HEK293 (cell line): ENCODE measurements at regions of chr12 and their contacts with region 1.

Region 1: GRCh38 chr12:3275171-3276041 is 198.2 kb downstream of the TSPAN9 start:
- H3K4me3 ChIP-seq: no peak overlapping the region
- H3K27ac ChIP-seq: no peak overlapping the region
- H3K4me1 ChIP-seq: no peaks in the 10 kb centered on the region
- CTCF ChIP-seq: peak; percentile 86

Region 2: DNA sequence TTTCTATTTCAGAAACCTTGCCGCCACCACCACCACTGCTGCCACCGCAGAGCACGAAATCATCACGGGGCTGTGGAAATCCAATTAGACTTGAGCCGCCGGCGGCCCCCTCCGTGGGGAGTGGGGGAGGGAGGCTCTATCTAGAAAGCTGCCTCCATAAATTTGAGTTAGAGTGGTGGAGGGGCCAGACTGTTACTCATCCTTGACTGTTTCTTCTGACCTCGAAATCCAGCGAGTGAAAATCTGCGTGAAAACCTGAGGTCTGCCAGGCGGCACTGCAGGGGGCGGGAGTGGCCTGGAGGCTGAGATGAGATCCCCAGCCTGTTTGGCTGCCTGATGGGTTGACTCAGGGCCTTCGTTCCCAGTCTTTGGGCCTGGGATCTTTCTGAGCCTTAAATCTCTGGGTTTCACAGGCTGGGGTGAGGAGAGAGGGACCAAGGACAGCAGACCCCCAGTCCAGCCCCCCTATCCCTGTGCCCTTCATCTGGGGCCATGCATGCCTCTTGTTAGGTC is 168.3 kb before region 1 on chr12:
- CTCF ChIA-PET with region 1: interaction called, 13 read pairs
- POLR2A ChIA-PET with region 1: no interaction called
- H3K4me3 ChIP-seq: no peak overlapping the region
- H3K27ac ChIP-seq: peak overlapping the region; percentile 49; the same call in 1 of the 2 replicates
- H3K4me1 ChIP-seq: peaks cover 8% of the 10 kb centered on the region
- CTCF ChIP-seq: no peak

Region 3: DNA sequence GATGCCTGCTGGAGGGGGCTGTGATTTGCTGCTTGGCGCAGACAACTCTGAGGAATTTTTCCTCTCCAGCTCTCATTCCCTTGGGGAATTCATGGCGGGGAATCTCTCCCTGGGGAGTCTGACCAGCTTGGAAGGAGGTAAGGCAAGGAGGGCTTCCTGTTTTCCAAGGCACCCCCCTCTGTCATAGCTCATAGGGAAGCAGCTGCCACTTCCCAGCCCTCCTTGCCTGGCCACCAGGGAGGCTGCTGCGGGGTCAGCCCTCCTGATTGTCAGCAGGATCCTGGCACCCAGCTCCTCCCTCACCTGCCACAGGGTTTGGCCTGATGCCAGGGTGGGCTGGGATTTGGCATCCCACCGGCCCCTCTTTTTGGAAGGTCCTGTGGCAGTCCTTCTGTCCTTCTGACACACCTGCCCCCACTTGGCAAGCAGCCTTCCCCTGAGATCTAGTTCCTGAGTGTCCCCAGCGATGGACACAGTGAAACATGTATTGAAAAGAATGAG is 123.3 kb before region 1 on chr12:
- CTCF ChIA-PET with region 1: interaction called, 12 read pairs
- POLR2A ChIA-PET with region 1: no interaction called
- H3K4me3 ChIP-seq: no peak overlapping the region
- H3K27ac ChIP-seq: no peak overlapping the region
- H3K4me1 ChIP-seq: 0 out of 2 replicates have a peak, but pooled peaks cover 5% of the 10 kb centered on the region
- CTCF ChIP-seq: no peak

Region 4: DNA sequence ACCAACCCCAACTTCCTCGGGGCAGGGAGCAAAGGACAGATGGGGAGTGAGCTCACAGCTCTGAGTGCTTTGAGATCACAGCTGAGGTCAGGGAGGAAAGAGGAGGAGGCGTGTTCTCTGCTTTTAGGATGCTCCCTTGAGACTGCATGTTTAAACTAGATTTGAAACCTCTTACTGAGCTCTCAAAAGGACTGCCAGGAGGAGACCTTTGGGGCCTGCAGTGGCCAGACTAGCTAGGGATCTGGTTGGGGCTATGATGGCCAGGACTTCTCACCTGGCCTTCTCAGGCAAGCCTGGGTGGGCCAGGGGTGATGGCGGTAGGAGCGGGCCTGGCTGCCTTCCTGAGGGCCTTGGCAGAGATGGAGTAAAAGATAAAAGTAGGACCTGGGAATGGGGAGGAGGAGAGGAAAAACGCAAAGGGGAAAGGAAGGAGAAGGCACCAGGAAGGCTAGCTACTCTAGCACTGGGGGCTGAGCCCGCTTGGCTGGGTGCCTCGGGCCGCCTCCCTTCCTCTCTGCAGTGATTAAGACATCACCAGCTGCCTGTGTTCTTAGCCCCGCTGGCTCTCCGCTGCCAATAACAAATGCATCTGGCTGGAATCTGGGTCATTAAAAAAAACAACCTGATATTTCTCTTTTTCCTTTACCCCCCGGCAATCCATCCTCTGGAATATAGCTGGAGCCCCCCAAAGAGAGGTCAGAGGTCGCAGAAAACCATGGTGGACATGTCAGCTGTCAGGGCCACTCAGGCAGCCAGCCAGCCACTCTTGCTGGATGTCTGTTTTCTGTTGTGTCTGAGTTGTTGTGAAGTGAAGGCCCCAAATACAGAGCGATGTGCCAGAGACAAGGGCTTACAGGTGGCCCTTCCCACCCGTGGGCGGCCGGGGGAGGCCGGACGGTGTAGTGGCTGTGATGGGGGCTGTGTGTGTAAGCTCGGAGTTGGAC is 56.9 kb before region 1 on chr12:
- CTCF ChIA-PET with region 1: interaction called, 13 read pairs
- POLR2A ChIA-PET with region 1: no interaction called
- H3K4me3 ChIP-seq: no peak overlapping the region
- H3K27ac ChIP-seq: no peak overlapping the region
- H3K4me1 ChIP-seq: peaks cover 6% of the 10 kb centered on the region; the same call in 1 of the 2 replicates
- CTCF ChIP-seq: no peak

Region 5: GRCh38 chr12:3288690-3289089 is 13.3 kb after region 1 on chr12:
- CTCF ChIA-PET with region 1: interaction called, 13 read pairs
- POLR2A ChIA-PET with region 1: no interaction called
- H3K4me3 ChIP-seq: no peak overlapping the region
- H3K27ac ChIP-seq: no peak overlapping the region
- H3K4me1 ChIP-seq: no peaks in the 10 kb centered on the region
- CTCF ChIP-seq: no peak

Region 6: DNA sequence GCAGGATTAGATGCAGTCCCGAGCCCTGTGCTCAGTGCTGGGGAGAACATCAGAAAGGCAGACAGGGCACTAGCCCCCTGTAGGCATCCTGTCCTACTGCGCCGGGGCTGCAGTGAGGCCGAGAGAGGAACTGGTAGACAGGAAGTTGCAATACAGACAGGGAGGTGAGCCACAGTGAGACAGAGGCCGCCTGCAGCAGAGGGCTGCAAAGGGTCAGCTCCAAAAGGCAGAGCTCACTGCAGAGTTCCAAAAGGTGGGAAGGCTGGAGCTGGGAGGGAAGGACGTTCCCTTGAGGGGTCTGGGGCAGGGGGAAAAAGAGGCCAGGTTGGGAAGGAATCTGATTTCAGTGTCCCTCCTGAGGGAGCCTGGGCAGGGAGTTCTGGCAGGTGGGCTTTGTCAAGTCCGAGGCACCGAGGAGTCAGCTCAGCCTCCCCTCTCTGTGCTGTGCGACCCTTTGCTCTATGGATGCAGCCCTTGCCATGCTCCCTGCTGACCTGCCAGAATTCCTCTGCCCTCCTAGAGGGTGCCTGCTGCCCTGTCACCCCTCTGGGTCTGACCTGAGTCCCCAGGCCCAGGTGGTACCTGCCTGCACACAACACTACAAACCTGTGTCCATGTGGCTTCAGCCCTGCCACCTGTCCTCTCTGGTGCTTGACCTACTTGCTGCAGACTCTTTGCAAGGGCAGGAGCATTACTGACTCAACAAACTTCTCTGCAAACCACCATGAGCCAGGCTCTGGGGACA is 279.1 kb after region 1 on chr12:
- CTCF ChIA-PET with region 1: no interaction called
- POLR2A ChIA-PET with region 1: no interaction called
- H3K4me3 ChIP-seq: no peak overlapping the region
- H3K27ac ChIP-seq: no peak overlapping the region
- H3K4me1 ChIP-seq: no peaks in the 10 kb centered on the region
- CTCF ChIP-seq: no peak